Thyroid gland (tissue), 4 donors: ENCODE measurements at regions of chr13 and their contacts with region 1.

Region 1: GRCh38 chr13:48775804-48776203 is 122.1 kb downstream of the CYSLTR2 start:
- DNase-seq: no peak
- H3K4me3 ChIP-seq: no peak overlapping the region
- H3K27ac ChIP-seq: no peak overlapping the region
- H3K4me1 ChIP-seq: no peaks in the 10 kb centered on the region
- H3K27me3 ChIP-seq: no peaks in the 10 kb centered on the region
- CTCF ChIP-seq: no peak
- POLR2A ChIP-seq: no peak

Region 2: GRCh38 chr13:48334534-48335127 is 441.2 kb before region 1 on chr13:
- intact Hi-C with region 1: loop called (anchors 10 kb)
- DNase-seq: no peak
- H3K4me3 ChIP-seq: no peak overlapping the region
- H3K27ac ChIP-seq: peak overlapping the region; percentile 7 to 41 (median 19)
- H3K4me1 ChIP-seq: peaks cover 9 to 11% of the 10 kb centered on the region in 2 donors
- H3K27me3 ChIP-seq: no peaks in the 10 kb centered on the region
- CTCF ChIP-seq: peak; percentile 5 to 87 (median 46)
- POLR2A ChIP-seq: no peak

Region 3: GRCh38 chr13:49097374-49097773 is 321.6 kb after region 1 on chr13:
- intact Hi-C with region 1: no loop called
- DNase-seq: no peak
- H3K4me3 ChIP-seq: no peak overlapping the region
- H3K27ac ChIP-seq: peak overlapping the region in 2 of 3 donors; percentile 43 to 63
- H3K4me1 ChIP-seq: peaks cover 14 to 28% of the 10 kb centered on the region in 2 donors
- H3K27me3 ChIP-seq: no peaks in the 10 kb centered on the region
- CTCF ChIP-seq: no peak
- POLR2A ChIP-seq: no peak